ENCODE measurements at regions of chr20 and their contacts with region 1.

Region 1: GRCh38 chr20:47356526-47357295 is at the start of gene ZMYND8:
- DNase-seq: peak; percentile 93
- H3K4me3 ChIP-seq: peak within 1 kb of the TSS; percentile 74
- H3K27ac ChIP-seq: peak within 1 kb of the TSS; percentile 90
- H3K4me1 ChIP-seq: peaks cover 76% of the 10 kb centered on the region
- CTCF ChIP-seq: no peak
- total RNA-seq, gene ZMYND8: 26.1 and 30.4 TPM in 2 replicates

Region 2: DNA sequence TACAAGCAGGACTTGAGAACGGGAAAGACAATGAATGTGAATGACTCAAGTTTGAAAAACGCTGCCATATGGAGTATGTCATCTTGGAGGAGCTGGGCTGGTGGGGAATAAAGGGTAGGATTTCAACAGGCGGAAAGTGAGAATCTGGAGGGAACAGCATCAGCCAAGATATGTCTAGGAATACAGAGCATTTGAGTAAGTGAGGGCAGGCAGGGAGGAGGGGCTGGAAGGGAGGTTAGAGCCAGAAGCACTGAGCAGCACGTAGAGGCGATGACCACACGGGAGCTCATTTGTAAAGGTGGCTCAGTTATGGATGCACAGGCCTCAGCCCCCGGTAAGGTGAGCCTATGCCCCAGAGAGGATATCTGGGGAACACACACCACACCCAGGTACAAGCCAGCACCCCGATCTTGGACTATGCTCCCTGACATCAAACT is 115.3 kb before region 1 on chr20:
- CTCF ChIA-PET with region 1: no interaction called
- POLR2A ChIA-PET with region 1: no interaction called
- intact Hi-C with region 1: no loop called
- DNase-seq: no peak
- H3K4me3 ChIP-seq: no peak overlapping the region
- H3K27ac ChIP-seq: no peak overlapping the region
- H3K4me1 ChIP-seq: no peaks in the 10 kb centered on the region
- CTCF ChIP-seq: no peak

Region 3: DNA sequence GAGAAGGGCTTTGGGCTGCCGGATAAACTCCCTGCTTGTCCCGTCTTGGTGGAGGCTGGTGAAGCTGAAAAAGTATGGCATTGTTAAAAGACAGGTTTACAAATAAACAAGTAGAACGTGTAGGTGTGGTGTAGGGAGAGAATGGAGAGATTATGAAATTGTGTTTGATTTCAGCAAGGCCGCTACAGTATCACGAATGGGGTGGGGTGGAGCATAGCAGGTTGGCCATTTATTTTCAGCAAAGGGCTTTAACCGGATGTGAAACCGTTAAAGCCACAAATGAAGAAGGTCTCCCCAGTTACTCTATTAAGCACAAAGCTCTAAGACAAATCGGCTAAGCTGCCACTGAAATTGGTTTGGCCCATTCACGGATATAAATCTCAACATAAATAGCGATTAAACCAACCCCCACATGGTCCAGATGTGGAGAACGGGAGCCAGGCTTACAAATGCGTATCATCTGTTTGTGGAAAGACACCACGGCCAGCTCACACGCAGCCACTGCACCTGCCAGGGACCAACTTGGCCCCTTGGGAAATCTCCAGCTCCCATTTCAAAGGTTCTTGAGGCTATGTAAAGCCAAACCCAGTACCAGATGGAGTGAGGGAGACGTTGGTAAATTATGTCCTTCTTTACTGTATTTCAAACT is 94.2 kb before region 1 on chr20:
- CTCF ChIA-PET with region 1: interaction called, 3 read pairs
- POLR2A ChIA-PET with region 1: interaction called, 9 read pairs
- intact Hi-C with region 1: loop called (anchors 2 kb)
- DNase-seq: peak; percentile 93
- H3K4me3 ChIP-seq: peak overlapping the region; percentile 62
- H3K27ac ChIP-seq: peak overlapping the region; percentile 99
- H3K4me1 ChIP-seq: peaks cover 89% of the 10 kb centered on the region
- CTCF ChIP-seq: no peak

Region 4: GRCh38 chr20:47296950-47297349 is 59.8 kb before region 1 on chr20:
- CTCF ChIA-PET with region 1: no interaction called
- POLR2A ChIA-PET with region 1: no interaction called
- intact Hi-C with region 1: no loop called
- DNase-seq: no peak
- H3K4me3 ChIP-seq: no peak overlapping the region
- H3K27ac ChIP-seq: no peak overlapping the region
- H3K4me1 ChIP-seq: no peaks in the 10 kb centered on the region
- CTCF ChIP-seq: peak; percentile 49

Region 5: GRCh38 chr20:47343007-47343472 is 13.7 kb before region 1 on chr20:
- CTCF ChIA-PET with region 1: interaction called, 3 read pairs
- POLR2A ChIA-PET with region 1: interaction called, 12 read pairs
- intact Hi-C with region 1: no loop called
- DNase-seq: no peak
- H3K4me3 ChIP-seq: no peak overlapping the region
- H3K27ac ChIP-seq: no peak overlapping the region
- H3K4me1 ChIP-seq: peaks cover 10% of the 10 kb centered on the region
- CTCF ChIP-seq: no peak

Region 6: GRCh38 chr20:47392015-47392720 is 35.5 kb after region 1 on chr20:
- CTCF ChIA-PET with region 1: no interaction called
- POLR2A ChIA-PET with region 1: interaction called, 14 read pairs
- intact Hi-C with region 1: no loop called
- DNase-seq: peak; percentile 78
- H3K4me3 ChIP-seq: peak overlapping the region; percentile 27
- H3K27ac ChIP-seq: peak overlapping the region; percentile 69
- H3K4me1 ChIP-seq: peaks cover 37% of the 10 kb centered on the region
- CTCF ChIP-seq: 0 out of 2 replicates have a peak, but pooled peaks have one; percentile 6

Region 7: DNA sequence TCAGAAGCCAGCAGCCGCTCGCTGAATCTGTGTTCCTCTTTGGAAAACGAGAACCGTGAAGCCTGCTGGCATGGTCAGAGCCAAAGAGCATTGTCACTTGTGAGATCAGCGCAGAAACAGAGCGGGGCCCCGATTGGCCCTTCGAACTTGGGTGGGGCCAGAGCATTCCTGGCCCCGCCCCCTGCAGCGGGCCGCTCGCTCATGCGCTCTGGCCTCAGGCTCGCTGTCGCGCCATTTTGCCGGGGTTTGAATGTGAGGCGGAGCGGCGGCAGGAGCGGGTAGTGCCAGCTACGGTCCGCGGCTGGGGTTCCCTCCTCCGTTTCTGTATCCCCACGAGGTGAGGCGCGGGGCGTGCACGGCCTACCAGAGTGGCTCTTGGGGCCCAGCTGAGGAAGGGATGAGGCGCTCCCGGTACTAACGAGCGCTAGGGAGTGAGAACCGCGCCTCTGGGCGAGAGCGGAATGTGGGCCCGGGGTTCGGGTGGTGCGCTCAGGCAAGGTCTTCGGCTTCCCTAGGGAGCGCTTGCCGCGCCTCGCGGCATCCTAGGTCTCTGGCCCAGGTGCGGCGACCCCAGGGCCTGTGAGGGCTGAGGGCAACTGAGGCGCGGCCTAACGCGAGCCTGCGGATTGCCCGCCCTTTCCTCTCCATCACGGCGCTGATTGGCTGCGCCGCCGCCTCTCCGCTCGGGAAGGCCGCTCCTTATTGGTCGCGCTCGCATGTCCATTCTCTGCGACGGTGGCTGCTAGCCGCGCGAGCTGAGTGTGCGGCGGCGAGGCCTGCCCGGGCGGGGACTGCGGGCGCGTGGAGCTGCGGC is 1689.6 kb after region 1 on chr20 and contains the start of gene CSE1L:
- CTCF ChIA-PET with region 1: no interaction called
- POLR2A ChIA-PET with region 1: no interaction called
- intact Hi-C with region 1: loop called (anchors 10 kb)
- DNase-seq: peak; percentile 96
- H3K4me3 ChIP-seq: peak within 1 kb of the TSS; percentile 96
- H3K27ac ChIP-seq: peak within 1 kb of the TSS; percentile 88
- H3K4me1 ChIP-seq: peaks cover 22% of the 10 kb centered on the region
- CTCF ChIP-seq: no peak
- total RNA-seq, gene CSE1L: 90.2 and 104 TPM in 2 replicates